Naive thymus-derived CD4-positive, alpha-beta T cell (primary cell): ENCODE measurements at regions of chr21 and their contacts with region 1.

Region 1: GRCh38 chr21:17813353-17813752 is 5.8 kb downstream of the C21orf91 start:
- DNase-seq: no peak
- ATAC-seq: no peak
- H3K4me3 ChIP-seq: no peak overlapping the region
- H3K4me3 Mint-ChIP-seq: peak overlapping the region in 4 of 10 donors; percentile 4 to 60 (median 24)
- H3K27ac ChIP-seq: no peak overlapping the region
- H3K27ac Mint-ChIP-seq: peak overlapping the region in 5 of 9 donors; percentile 5 to 87 (median 55)
- H3K4me1 ChIP-seq: peaks cover 26 to 29% of the 10 kb centered on the region in 2 donors
- H3K4me1 Mint-ChIP-seq: peaks cover 45 to 78% (median 61%) of the 10 kb centered on the region in 7 donors
- H3K27me3 ChIP-seq: no peaks in the 10 kb centered on the region
- H3K27me3 Mint-ChIP-seq: no peaks in the 10 kb centered on the region

Region 2: GRCh38 chr21:17798796-17799195 is 14.6 kb before region 1 on chr21:
- CTCF ChIA-PET with region 1: interaction called, 6 read pairs
- POLR2A ChIA-PET with region 1: interaction called, 56 read pairs
- intact Hi-C with region 1: loop called (anchors 1 kb)
- DNase-seq: no peak
- ATAC-seq: no peak
- H3K4me3 ChIP-seq: no peak overlapping the region
- H3K4me3 Mint-ChIP-seq: peak overlapping the region in 1 of 10 donors; percentile 34
- H3K27ac ChIP-seq: peak overlapping the region; percentile 21
- H3K27ac Mint-ChIP-seq: peak overlapping the region in 7 of 9 donors; percentile 12 to 86 (median 61)
- H3K4me1 ChIP-seq: peaks cover 36 to 39% of the 10 kb centered on the region in 2 donors
- H3K4me1 Mint-ChIP-seq: peaks cover 24 to 78% (median 60%) of the 10 kb centered on the region in 7 donors
- H3K27me3 ChIP-seq: no peaks in the 10 kb centered on the region
- H3K27me3 Mint-ChIP-seq: no peaks in the 10 kb centered on the region

Region 3: GRCh38 chr21:17981060-17981740 is 167.8 kb after region 1 on chr21:
- CTCF ChIA-PET with region 1: no interaction called
- POLR2A ChIA-PET with region 1: no interaction called
- intact Hi-C with region 1: no loop called
- DNase-seq: no peak
- ATAC-seq: no peak
- H3K4me3 ChIP-seq: no peak overlapping the region
- H3K4me3 Mint-ChIP-seq: no peak overlapping the region
- H3K27ac ChIP-seq: no peak overlapping the region
- H3K27ac Mint-ChIP-seq: no peak overlapping the region
- H3K4me1 ChIP-seq: no peaks in the 10 kb centered on the region
- H3K4me1 Mint-ChIP-seq: no peaks in the 10 kb centered on the region
- H3K27me3 ChIP-seq: no peaks in the 10 kb centered on the region
- H3K27me3 Mint-ChIP-seq: no peaks in the 10 kb centered on the region